BJ (cell line): ENCODE measurements at regions of chr20 and their contacts with region 1.

Region 1: DNA sequence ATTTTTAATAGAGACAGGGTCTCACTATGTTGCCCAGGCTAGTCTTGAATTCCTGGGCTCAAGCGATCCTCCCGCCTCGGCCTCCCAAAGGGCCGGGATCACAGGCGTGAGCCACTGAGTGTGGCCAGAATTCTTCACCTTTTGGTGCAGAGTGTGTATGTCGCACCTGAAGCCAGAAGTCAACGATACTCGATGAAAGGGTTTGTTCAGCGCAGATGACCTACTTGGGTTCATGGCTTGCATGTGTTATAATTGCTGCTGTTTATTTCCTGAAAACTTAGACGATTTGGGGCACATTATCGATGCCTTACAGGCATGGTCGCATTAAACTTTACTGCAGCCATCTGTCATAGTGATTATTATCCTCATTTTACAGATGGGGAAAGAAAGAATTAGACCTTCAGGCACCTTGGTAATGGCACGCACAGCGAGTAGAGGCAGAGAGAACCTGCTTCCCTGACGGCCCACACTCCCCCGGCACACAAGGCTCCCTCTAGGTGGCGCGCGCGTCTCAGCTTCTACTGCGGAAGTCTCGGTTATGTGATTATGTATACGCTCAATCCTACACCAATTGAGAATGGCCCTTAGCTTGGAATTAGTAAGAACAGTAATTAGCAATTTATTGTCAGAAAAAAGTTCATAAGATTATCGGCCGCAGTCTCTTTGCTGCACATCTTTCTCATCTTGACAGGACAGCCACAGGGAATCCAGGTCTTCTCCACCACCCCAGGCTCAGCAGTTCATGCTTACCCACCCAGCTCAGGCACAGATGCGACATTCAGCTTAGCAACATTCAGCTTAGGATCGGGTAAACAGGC is 212.8 kb upstream of the PROKR2 start:
- DNase-seq: peak; percentile 9
- H3K4me3 ChIP-seq: no peak overlapping the region
- H3K27me3 ChIP-seq: no peaks in the 10 kb centered on the region
- CTCF ChIP-seq: peak; percentile 96

Region 2: GRCh38 chr20:5316188-5317158 is 213.1 kb before region 1 on chr20 and contains the start of gene PROKR2:
- CTCF ChIA-PET with region 1: no interaction called
- POLR2A ChIA-PET with region 1: no interaction called
- DNase-seq: no peak
- H3K4me3 ChIP-seq: no peak within 1 kb of the TSS
- H3K27me3 ChIP-seq: peaks cover 7% of the 10 kb centered on the region
- CTCF ChIP-seq: no peak
- polyA plus RNA-seq, gene PROKR2: not detected in 2 replicates

Region 3: GRCh38 chr20:5539691-5540090 is 10.2 kb after region 1 on chr20:
- CTCF ChIA-PET with region 1: interaction called, 21 read pairs
- POLR2A ChIA-PET with region 1: no interaction called
- DNase-seq: no peak
- H3K4me3 ChIP-seq: no peak overlapping the region
- H3K27me3 ChIP-seq: no peaks in the 10 kb centered on the region
- CTCF ChIP-seq: no peak

Region 4: GRCh38 chr20:5557123-5557522 is 27.6 kb after region 1 on chr20:
- CTCF ChIA-PET with region 1: interaction called, 28 read pairs
- POLR2A ChIA-PET with region 1: no interaction called
- DNase-seq: no peak
- H3K4me3 ChIP-seq: no peak overlapping the region
- H3K27me3 ChIP-seq: no peaks in the 10 kb centered on the region
- CTCF ChIP-seq: peak; percentile 69

Region 5: GRCh38 chr20:5797843-5798462 is 268.4 kb after region 1 on chr20:
- CTCF ChIA-PET with region 1: interaction called, 13 read pairs
- POLR2A ChIA-PET with region 1: no interaction called
- DNase-seq: no peak
- H3K4me3 ChIP-seq: no peak overlapping the region
- H3K27me3 ChIP-seq: no peaks in the 10 kb centered on the region
- CTCF ChIP-seq: no peak

Region 6: DNA sequence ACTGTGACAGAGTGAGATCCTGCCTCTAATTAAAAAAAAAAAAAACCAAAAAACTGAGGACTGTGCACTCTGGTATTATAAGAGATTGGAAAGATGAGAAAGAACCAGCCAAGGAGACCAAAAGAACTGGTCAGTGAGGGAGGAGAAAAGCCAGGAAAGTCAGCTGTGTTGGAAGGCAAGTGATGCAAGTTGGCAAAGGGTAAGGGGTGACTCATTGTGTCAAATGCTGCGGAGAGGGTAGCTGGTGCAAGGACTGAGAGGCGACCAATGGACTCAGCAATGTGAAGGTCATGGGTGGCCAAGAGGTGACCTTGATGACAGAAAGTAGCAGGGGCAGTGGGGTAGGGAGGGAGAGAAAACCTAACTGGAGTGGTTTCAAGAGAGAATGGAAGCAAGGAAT is 551.7 kb after region 1 on chr20:
- CTCF ChIA-PET with region 1: interaction called, 93 read pairs
- POLR2A ChIA-PET with region 1: no interaction called
- DNase-seq: no peak
- H3K4me3 ChIP-seq: no peak overlapping the region
- H3K27me3 ChIP-seq: no peaks in the 10 kb centered on the region
- CTCF ChIP-seq: no peak

Region 7: GRCh38 chr20:6685181-6685582 is 1155.6 kb after region 1 on chr20:
- CTCF ChIA-PET with region 1: no interaction called
- POLR2A ChIA-PET with region 1: no interaction called
- DNase-seq: no peak
- H3K4me3 ChIP-seq: no peak overlapping the region
- H3K27me3 ChIP-seq: no peaks in the 10 kb centered on the region
- CTCF ChIP-seq: no peak